Motor neuron (in vitro differentiated cells): ENCODE measurements at regions of chr10 and their contacts with region 1.

Region 1: GRCh38 chr10:87054373-87055295 is 34.5 kb downstream of the FAM25A start:
- ATAC-seq: peak in 4 of 8 experiments; percentile 11 to 68 (median 60)
- H3K4me3 ChIP-seq: no peak overlapping the region
- H3K27ac ChIP-seq: no peak overlapping the region
- H3K4me1 ChIP-seq: no peaks in the 10 kb centered on the region

Region 2: GRCh38 chr10:86905429-86905828 is 149.2 kb before region 1 on chr10:
- in situ Hi-C with region 1: no loop called
- ATAC-seq: no peak
- H3K4me3 ChIP-seq: no peak overlapping the region
- H3K27ac ChIP-seq: no peak overlapping the region
- H3K4me1 ChIP-seq: no peaks in the 10 kb centered on the region

Region 3: DNA sequence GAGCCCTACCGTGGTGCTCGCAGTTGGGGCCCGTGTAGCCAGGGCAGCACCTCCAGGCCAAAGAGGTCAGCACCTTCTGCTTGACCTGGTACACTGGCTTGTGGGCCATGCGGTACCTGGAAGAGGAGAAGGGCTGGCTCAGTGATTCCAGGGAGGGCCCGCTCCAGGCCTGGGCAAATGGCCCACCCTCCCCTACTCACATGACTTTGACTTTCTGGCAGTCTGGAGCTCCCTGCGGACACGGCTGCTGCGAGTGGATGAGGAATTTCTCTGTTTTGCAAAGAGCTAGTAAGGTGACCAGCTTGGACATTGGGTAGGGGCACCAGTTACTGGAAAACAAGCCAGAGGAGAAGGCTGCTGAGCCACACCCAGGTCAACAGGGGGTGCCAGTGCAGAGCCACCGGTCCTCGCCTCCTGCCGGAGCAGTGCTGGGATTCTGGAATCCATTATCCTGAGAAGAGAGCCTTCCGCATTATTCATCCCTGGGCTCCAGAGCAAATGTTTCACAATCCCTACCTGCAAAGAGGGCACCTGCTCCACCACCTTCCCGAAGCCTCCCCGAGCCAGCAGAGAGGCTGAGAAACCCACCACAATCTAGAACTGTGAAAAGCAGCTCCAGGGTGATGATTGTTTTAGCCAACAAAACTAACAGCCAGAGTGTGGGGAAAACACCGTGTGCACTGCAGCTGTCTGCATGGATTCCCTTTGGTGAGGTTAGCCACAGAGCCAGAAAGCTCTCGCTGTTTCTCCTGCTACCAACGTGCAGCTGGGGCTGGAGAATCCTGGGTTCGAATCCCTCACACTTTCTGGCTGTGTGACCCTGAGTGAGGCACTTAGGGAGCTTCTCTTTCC is 109.0 kb before region 1 on chr10:
- in situ Hi-C with region 1: loop called in 2 of 9 experiments (anchors 25 kb)
- ATAC-seq: peak; percentile 4 to 80 (median 72)
- H3K4me3 ChIP-seq: no peak overlapping the region
- H3K27ac ChIP-seq: peak overlapping the region in 1 of 2 donors; percentile 30
- H3K4me1 ChIP-seq: peaks cover 16 to 24% of the 10 kb centered on the region in 2 donors